ENCODE measurements at regions of chr11 and their contacts with region 1.

Region 1: DNA sequence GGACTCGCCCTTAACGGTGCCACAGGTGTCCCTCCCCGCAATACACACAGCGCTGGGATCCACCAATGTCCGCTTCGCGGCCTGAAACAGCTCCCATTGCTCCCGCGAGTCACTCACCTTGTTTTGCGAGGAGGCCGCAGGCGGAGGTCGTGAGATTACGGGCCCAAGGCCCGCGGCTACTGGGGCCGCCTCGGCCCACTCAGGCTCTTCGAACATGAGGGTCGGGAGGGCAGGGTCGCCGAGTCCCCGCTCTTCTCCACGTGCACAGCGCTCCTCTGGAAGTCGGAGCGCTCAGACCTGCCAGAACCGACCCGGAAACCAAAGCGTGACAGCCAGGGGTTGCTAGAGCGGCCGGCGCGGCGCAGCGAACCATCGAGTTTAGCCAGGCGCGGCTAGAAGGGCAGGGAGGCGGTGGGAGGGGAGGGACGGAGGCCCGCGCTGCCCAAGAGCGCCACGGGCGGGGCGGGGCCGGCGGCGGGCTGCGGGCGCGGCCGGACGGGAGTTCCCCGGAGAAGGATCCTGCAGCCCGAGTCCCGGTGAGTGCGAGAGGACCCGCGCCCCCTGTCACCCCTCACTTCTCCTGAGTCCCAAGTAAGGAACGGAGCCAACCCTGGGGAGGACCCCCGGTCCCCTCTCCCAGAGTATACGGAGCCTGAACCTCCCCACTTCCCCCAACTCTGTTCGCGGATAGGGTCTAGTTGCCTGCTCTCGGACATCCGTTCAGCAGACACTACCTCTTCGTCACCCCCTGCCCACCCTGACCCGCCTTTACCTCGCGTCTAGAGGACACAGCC is at the starts of genes ILK and RRP8:
- DNase-seq: peak; percentile 94
- H3K4me3 ChIP-seq: peak within 1 kb of the TSS; percentile 78 to 90 (median 88)
- H3K27ac ChIP-seq: peak within 1 kb of the TSS; percentile 96 to 99 (median 97)
- H3K4me1 ChIP-seq: peaks cover 34 to 56% (median 46%) of the 10 kb centered on the region in 4 donors
- H3K27me3 ChIP-seq: no peaks in the 10 kb centered on the region
- CTCF ChIP-seq: peak in 2 of 5 experiments; percentile 22 to 24
- EP300 ChIP-seq: no peak
- POLR2A ChIP-seq: peak; percentile 70
- total RNA-seq, gene ILK: 159 to 211 (median 169) TPM
- total RNA-seq, gene RRP8: 9.7 to 145 (median 48.2) TPM

Region 2: DNA sequence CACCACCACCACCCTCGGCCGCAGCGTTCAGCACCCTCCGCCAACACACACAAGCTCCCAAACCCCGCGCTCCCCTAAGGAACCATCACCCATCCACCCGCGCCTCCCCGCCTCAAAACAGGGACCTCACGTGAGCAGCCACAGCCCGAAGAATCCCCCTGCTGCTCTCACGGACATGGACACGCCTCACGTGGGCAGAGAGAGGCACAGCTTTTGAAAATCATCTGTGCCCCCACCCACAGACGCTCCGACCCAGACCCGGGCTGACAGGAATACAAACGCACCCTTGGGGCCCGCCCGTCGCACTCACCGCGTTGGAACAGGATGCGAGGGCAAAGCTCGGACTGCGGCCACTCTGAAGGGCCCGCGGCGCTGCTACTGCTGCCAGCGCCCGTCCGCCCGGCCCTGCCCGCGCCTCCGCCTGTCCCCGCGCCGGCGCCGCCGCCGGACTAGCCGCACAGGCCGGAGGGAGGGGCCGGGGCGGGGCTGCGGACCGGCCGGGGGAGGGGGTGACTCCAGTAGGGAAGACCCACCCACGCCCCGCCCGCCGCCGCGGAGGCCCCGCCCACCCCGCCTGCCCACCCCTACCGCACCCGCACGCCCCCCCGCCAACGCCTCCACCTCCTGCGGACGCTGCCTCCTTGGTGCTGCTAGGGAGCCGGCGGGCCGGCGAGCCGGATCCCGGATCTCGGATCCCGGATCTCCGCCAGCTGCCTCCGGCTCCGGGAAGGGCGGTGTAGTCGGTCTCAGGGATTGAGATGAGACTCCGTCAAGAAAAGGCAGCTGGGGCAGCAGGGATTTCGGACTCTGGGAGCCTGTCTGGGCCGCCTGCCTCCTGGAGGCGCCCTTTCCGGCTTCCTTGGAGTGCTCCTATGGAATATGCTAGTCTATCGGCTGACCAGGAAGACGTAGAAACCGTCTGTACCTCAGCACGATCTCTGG is 129.7 kb before region 1 on chr11 and contains the start of gene TRIM3:
- in situ Hi-C with region 1: loop called in 1 of 4 experiments (anchors 10 kb)
- intact Hi-C with region 1: no loop called
- DNase-seq: peak; percentile 96
- H3K4me3 ChIP-seq: peak within 1 kb of the TSS; percentile 55 to 77 (median 72)
- H3K27ac ChIP-seq: peak within 1 kb of the TSS; percentile 92 to 99 (median 97)
- H3K4me1 ChIP-seq: peaks cover 20 to 61% (median 45%) of the 10 kb centered on the region in 4 donors
- H3K27me3 ChIP-seq: no peaks in the 10 kb centered on the region
- CTCF ChIP-seq: peak in 3 of 5 experiments; percentile 9 to 25 (median 13)
- EP300 ChIP-seq: no peak
- POLR2A ChIP-seq: peak; percentile 85
- total RNA-seq, gene TRIM3: 49.1 to 205 (median 67.9) TPM

Measured in transverse colon (tissue), 4 donors.